Activated B cell treated with CpG ODN at 0.5 μM for 24 hours (primary cell): ENCODE measurements at regions of chr6 and their contacts with region 1.

Region 1: DNA sequence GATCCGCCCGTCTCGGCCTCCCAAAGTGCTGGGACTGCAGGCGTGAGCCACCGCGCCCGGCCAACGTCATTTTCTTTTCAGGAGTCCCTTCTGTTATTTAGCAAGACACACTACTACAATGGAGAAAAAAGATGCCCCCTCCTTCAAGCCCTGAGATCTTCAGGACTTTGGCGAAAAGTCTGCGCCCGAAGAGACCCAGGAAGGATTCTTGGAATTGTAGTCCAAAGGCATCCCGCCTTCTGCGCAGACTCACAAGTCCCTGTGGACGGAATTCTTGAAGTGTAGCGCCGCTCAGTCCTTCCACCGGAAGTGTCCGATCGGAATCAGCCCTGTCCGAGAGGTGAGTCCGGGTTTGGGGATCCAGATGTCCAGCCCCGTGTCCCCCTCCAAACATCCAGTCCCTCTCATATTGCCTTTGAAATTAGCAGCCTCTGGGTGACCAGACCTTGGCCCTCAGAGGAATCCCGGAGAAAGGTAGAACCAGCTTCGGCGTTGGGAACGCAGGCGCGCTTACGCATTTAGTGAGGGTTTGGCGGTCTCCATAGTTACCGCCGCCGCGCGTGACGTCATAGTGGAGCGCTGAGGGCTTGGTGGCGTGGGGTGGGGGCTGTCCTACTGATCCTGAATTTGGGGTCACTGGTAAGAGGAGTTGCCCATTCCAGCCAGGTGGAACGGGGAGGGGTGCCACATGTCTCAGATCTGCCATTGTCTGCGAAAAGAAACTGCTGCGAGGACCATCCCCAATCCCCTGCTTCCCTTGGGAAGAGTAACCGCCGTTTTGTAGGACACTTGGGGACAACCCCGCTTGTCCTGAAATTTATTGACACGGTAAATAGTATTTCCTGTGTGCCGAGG is 490 bp downstream of the ZNF165 start:
- DNase-seq: peak; percentile 89
- ATAC-seq: peak; percentile 68
- H3K4me3 Mint-ChIP-seq: peak overlapping the region; percentile 98
- H3K27ac Mint-ChIP-seq: peak overlapping the region; percentile 97
- H3K4me1 Mint-ChIP-seq: peaks cover 52% of the 10 kb centered on the region
- H3K27me3 Mint-ChIP-seq: no peaks in the 10 kb centered on the region
- CTCF ChIP-seq: no peak

Region 2: DNA sequence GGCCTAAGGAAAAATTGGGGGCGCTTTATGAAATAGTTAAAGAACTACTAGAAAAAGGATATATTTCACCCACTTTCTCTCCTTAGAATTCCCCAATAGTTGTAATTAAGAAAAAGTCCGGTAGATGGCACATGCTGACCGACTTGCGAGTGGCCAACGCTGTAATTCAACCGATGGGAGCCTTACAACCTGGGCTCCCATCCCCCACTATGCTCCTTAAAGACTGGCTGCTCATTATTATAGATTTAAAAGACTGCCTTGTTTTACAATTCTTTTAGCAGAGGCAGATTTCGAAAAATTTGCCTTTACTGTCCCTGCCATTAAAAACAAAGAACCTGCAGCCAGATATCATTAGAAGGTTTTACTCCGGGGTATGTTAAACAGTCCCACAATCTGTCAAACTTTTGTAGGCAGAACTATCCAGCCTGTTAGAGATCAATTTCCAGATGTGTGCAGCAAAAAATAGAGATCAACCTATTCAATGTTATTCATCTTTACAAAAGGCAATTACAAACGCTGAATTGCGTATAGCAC is 891.9 kb before region 1 on chr6:
- CTCF ChIA-PET with region 1: no interaction called
- POLR2A ChIA-PET with region 1: no interaction called
- intact Hi-C with region 1: loop called (anchors 5 kb)
- DNase-seq: no peak
- ATAC-seq: peak; percentile 80
- H3K4me3 Mint-ChIP-seq: peak overlapping the region; percentile 83
- H3K27ac Mint-ChIP-seq: peak overlapping the region; percentile 19
- H3K4me1 Mint-ChIP-seq: peaks cover 8% of the 10 kb centered on the region
- H3K27me3 Mint-ChIP-seq: peaks cover 2% of the 10 kb centered on the region
- CTCF ChIP-seq: no peak

Region 3: GRCh38 chr6:27694545-27694870 is 386.4 kb before region 1 on chr6:
- CTCF ChIA-PET with region 1: no interaction called
- POLR2A ChIA-PET with region 1: no interaction called
- intact Hi-C with region 1: no loop called
- DNase-seq: no peak
- ATAC-seq: no peak
- H3K4me3 Mint-ChIP-seq: peak overlapping the region; percentile 99
- H3K27ac Mint-ChIP-seq: peak overlapping the region; percentile 85
- H3K4me1 Mint-ChIP-seq: peaks cover 19% of the 10 kb centered on the region
- H3K27me3 Mint-ChIP-seq: no peaks in the 10 kb centered on the region
- CTCF ChIP-seq: no peak

Region 4: DNA sequence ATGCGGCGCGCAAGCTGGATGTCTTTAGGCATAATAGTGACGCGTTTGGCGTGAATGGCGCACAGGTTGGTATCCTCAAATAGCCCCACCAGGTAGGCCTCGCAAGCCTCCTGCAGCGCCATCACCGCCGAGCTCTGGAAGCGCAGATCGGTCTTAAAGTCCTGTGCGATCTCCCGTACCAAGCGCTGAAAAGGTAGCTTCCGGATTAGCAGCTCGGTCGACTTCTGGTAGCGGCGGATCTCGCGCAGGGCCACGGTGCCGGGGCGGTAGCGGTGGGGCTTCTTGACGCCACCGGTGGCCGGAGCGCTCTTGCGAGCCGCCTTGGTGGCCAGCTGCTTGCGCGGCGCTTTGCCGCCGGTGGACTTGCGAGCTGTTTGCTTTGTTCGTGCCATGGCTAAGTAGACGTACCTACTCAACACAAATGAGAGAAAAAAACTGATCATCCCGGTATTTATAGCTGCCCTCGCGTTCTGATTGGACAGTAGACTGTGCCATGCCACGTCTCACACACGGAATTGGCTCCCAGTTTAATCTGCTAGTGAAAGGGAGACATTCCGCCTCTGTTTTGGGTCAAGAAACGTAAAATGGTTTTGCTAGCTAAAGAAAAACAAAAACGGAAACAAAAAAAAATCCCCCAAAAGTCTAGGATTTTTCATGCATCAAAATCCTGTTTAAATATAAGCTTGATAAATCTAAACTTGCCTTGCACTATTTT is 208.8 kb before region 1 on chr6:
- CTCF ChIA-PET with region 1: no interaction called
- POLR2A ChIA-PET with region 1: interaction called, 9 read pairs
- intact Hi-C with region 1: loop called (anchors 1 kb)
- DNase-seq: peak; percentile 73
- ATAC-seq: peak; percentile 80
- H3K4me3 Mint-ChIP-seq: peak overlapping the region; percentile 94
- H3K27ac Mint-ChIP-seq: peak overlapping the region; percentile 95
- H3K4me1 Mint-ChIP-seq: peaks cover 36% of the 10 kb centered on the region
- H3K27me3 Mint-ChIP-seq: no peaks in the 10 kb centered on the region
- CTCF ChIP-seq: no peak

Region 5: DNA sequence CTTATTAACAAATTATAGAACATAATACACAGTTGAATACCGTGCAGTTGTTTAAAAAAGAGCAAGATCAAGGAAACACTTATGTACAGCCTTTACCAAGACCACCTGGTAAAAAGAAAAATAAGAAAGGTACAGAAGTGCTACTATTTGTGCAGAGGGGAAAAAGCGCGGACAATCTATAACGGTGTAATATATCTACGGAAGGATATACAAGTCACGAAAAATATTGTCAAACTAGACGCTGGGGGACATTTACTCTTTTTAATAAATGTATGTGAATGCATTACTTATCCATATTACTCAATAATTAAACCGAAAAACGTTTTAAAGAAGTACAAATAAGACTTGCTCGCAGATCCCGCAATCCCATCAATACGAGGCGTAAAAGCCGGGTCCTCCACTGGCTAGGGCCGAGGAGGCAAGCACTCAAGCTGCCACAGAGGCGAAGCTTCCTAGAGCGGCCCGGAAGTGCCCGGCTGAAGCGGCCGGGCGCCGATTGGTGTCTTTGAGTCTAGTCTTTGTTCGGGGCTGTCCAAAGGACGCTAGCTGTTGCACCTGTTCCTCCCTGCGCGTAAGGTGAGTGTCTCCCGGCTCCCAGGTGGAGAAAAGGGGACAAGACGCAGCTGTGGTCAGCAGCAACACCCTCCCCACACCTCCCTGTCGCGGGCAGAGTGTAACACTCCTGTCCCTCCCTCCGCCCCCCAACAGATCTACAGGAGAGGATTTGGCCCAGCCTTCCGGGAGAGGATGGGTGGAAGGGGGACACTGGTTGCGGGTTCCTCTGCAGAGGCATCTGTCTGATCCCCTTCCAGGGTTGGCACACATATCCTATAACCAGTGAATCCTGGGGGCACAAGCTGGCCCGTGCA is 43.5 kb after region 1 on chr6 and contains the start of gene ZSCAN16:
- CTCF ChIA-PET with region 1: no interaction called
- POLR2A ChIA-PET with region 1: interaction called, 5 read pairs
- intact Hi-C with region 1: loop called (anchors 1 kb)
- DNase-seq: peak; percentile 72
- ATAC-seq: peak; percentile 96
- H3K4me3 Mint-ChIP-seq: peak within 1 kb of the TSS; percentile 97
- H3K27ac Mint-ChIP-seq: peak within 1 kb of the TSS; percentile 95
- H3K4me1 Mint-ChIP-seq: peaks cover 27% of the 10 kb centered on the region
- H3K27me3 Mint-ChIP-seq: no peaks in the 10 kb centered on the region
- CTCF ChIP-seq: no peak
- total RNA-seq, gene ZSCAN16: 10.6 and 12.6 TPM in 2 replicates

Region 6: DNA sequence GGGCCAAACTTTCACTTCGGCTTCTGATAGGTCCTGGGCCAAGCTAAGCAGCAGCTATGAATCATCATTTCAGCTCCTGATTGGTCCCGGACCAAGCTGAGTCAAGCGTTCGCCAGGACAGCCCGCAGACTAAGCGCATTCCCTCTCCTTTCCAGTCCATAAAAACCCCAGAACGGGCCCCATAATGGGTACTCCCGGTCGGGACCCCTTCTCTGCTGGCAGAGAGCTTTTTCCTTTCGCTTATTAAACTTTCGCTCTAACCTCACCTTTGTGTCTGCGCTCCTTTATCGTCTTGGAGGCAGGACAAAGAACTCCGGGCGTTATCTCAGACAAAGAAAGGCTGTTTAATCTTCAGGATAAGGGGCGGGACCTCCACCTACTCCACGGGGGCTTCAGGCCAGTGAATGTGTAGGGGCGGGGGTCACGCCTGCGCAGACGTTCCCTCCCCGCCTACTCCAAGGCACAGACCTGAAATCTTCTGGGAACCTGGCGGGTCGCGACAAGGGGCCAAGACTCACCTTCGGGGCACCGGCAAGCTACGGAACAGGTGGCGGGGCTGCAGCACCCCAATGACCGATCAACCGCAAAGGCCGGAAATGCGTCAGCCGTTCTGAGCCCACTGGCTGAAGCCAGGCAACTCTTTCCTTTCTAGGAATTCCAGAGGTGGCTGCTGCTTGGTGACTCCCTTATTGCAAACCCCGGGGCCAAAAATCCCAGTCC is 254.9 kb after region 1 on chr6 and contains the start of gene ZSCAN31:
- CTCF ChIA-PET with region 1: no interaction called
- POLR2A ChIA-PET with region 1: interaction called, 4 read pairs
- intact Hi-C with region 1: loop called (anchors 1 kb)
- DNase-seq: peak; percentile 61
- ATAC-seq: peak; percentile 93
- H3K4me3 Mint-ChIP-seq: no peak within 1 kb of the TSS
- H3K27ac Mint-ChIP-seq: no peak within 1 kb of the TSS
- H3K4me1 Mint-ChIP-seq: no peaks in the 10 kb centered on the region
- H3K27me3 Mint-ChIP-seq: no peaks in the 10 kb centered on the region
- CTCF ChIP-seq: no peak
- total RNA-seq, gene ZSCAN31: 1.0 and 3.6 TPM in 2 replicates

Region 7: DNA sequence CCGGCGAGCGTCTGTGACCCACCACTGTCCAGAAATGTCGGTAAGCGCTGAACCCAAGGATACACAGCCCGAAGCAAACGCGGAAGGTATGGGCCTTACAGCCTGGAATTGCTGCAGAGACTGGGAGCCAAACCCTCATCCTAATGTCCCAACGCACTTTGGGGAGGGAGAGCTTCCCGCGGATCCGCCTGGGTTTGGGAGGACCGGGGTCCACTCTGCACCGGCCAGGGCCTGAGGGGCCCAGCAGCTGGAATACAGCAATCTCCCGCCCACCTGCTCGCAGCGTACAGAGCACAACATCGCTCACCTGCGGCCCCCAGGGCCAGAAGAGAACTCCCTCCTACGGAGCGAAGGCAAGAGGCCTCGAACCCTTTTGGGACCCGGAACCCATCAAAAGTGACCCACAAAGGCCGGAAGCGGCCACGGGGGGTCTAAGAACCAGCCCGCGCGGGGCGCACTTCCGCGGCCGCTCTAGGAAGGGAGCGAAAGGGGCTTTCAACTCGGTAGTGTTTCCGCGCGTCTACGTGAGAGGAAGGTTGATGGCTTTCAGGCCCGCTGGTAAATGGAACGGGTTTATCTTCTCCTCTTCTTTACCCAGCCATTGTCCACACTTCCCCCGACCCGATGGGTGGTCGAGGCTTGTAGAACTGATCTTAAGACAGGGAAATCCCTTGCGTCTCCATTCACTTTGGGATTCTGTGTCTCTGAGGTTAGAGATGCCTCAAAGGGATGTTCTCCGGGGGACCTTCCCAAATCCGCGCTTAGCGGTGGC is 318.7 kb after region 1 on chr6 and contains the start of gene ZSCAN12:
- CTCF ChIA-PET with region 1: no interaction called
- POLR2A ChIA-PET with region 1: no interaction called
- intact Hi-C with region 1: loop called (anchors 1 kb)
- DNase-seq: peak; percentile 79
- ATAC-seq: peak; percentile 89
- H3K4me3 Mint-ChIP-seq: peak within 1 kb of the TSS; percentile 97
- H3K27ac Mint-ChIP-seq: peak within 1 kb of the TSS; percentile 95
- H3K4me1 Mint-ChIP-seq: peaks cover 42% of the 10 kb centered on the region
- H3K27me3 Mint-ChIP-seq: peaks cover 34% of the 10 kb centered on the region
- CTCF ChIP-seq: no peak
- total RNA-seq, gene ZSCAN12: 12.8 and 13.0 TPM in 2 replicates